Right ventricle myocardium inferior (tissue), 1 donor: ENCODE measurements at regions of chr10 and their contacts with region 1.

Region 1: DNA sequence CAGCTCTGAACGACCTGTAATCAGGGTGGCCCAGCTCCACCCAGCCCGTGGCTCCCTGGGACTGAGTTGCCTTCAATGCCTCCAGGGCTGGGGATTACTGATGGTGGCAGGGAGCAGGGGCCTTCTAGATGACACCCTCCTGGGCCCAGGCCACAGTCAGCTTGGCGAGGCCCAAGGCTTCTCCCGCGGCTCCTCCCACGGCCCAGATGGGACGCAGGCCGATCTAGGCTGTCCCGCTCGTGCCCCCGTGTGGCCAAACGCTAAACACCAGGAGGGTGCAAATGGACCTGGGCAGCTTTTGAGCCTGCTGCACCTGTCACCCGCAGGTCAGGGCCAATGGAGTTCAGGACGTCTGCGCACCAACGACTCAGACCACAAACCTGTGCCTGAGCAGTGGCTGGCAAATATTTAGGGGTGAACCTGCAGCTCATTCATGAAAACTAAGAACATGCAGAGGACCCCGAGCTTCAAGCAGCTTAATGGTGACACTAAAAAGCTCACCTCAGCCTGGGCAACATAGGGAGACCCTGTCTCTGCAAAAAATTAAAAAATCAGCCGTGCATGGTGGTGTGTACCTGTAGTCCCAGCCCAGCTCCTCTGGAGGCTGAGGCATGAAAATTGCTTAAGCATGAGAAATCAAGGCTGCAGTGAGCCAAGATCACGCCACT is 43.2 kb downstream of the ASB13 start:
- DNase-seq: peak; percentile 94
- ATAC-seq: peak; percentile 92

Region 2: DNA sequence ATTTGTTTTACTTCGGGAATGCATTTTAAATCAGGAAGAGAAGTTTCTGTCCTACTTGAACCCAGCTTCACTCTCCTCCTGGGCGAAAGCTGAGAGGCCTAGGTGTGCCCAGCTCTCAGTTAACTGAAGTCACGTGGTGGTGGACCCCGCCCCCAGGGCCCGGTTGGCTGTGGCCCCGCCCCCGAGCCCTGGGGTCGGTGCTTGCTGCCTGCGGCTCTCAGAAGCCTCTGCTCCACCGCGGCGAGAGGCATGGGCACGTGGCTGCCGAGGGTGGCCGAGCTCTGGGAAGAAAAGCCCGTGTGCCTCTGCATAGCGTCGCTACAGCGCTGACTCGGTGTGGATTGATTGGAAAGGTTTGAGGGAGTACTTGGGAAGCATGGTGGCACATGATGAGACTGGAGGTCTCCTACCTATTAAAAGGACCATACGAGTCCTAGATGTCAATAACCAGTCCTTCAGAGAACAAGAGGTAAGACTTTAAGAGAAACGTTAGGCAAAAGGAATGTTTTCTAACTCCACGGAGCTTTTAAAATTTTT is 176.8 kb before region 1 on chr10:
- intact Hi-C with region 1: loop called (anchors 1 kb)
- DNase-seq: peak; percentile 95
- ATAC-seq: peak; percentile 96

Region 3: DNA sequence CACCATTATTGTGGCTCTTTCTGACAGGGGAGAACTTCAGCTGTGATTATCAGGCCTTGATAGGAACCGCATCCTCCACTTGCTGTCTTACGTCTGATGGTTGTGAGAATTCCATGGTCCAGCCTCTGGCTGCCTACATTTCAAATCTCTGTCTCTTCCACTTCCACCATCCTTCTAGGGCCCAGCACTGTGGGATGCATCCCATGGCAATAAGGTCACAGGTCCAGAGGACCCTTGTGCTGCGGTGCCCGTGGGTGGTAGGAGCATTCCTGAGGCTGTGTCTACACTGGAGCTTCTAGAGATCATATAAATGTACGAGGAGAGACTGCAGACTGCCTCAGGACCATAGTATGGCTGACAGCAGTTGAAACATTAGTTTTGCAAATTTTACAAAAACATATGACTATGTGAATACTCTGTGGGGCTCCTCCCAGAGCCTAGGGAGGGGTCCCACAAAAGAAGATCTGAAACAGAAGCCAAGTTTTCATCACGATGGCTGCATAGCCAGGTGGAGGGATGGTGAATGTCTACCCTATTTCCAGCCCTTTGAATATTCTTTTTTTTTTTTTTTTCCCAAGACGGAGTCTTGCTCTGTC is 86.6 kb before region 1 on chr10:
- intact Hi-C with region 1: loop called (anchors 1 kb)
- DNase-seq: no peak
- ATAC-seq: no peak